Activated T-helper 1 cell treated with anti-CD3 and anti-CD28 coated beads, Interleukin-12 subunit alpha, Interleukin-12 subunit beta, Interleukin-2, Interleukin-4 antibody, amounts not matched to agents 30 ng/mL and 10 ng/mL and 1 ng/mL, durations not matched to agents 14 hours and 24 hours and 36 hours (primary cell): ENCODE measurements at regions of chr12 and their contacts with region 1.

Region 1: GRCh38 chr12:14460212-14460841 is 94.8 kb downstream of the ATF7IP start:
- DNase-seq: no peak
- H3K4me3 Mint-ChIP-seq: no peak overlapping the region
- H3K27ac Mint-ChIP-seq: no peak overlapping the region
- H3K4me1 Mint-ChIP-seq: peaks cover 32% of the 10 kb centered on the region
- H3K27me3 Mint-ChIP-seq: no peaks in the 10 kb centered on the region

Region 2: DNA sequence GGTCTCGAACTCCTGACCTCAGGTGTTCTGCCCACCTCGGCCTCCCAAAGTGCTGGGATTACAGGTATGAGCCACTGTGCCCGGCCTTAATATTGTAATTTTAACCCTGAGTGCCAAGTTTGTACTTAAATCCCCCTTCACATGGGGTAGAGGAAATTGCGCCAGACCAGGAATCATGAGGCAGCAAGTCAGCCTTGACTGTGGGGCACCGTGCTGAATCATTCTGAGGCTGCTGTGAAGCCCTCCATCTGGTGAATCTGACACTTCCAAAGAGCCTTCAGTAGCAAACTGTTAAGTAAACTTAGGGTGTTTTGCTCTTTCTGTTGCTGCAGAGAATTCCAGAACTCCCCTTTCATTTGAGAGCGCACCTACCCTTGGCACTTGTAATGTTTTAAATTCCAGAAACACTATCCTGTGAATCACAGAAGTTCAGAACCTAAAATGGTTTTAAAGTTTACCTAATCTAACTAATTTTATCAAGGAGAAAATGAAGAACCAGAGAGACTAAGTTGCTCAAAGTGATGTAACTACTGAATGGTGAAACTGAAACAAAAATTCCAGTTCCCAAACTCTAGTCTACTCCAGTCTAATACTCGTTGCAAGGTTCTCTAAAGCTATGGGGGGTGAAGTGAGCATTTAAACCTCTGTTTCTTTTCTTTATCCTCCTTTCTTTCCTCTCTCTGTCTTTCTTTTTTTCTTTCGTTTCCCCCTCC is 1467.8 kb before region 1 on chr12:
- intact Hi-C with region 1: no loop called
- DNase-seq: no peak
- H3K4me3 Mint-ChIP-seq: no peak overlapping the region
- H3K27ac Mint-ChIP-seq: no peak overlapping the region
- H3K4me1 Mint-ChIP-seq: peaks cover 20% of the 10 kb centered on the region
- H3K27me3 Mint-ChIP-seq: no peaks in the 10 kb centered on the region

Region 3: GRCh38 chr12:13347241-13348043 is 1112.9 kb before region 1 on chr12:
- intact Hi-C with region 1: no loop called
- DNase-seq: no peak
- H3K4me3 Mint-ChIP-seq: no peak overlapping the region
- H3K27ac Mint-ChIP-seq: no peak overlapping the region
- H3K4me1 Mint-ChIP-seq: peaks cover 12% of the 10 kb centered on the region
- H3K27me3 Mint-ChIP-seq: peaks cover 11% of the 10 kb centered on the region

Region 4: GRCh38 chr12:14185427-14186192 is 274.7 kb before region 1 on chr12:
- intact Hi-C with region 1: no loop called
- DNase-seq: peak; percentile 3
- H3K4me3 Mint-ChIP-seq: no peak overlapping the region
- H3K27ac Mint-ChIP-seq: no peak overlapping the region
- H3K4me1 Mint-ChIP-seq: no peaks in the 10 kb centered on the region
- H3K27me3 Mint-ChIP-seq: peaks cover 4% of the 10 kb centered on the region

Region 5: DNA sequence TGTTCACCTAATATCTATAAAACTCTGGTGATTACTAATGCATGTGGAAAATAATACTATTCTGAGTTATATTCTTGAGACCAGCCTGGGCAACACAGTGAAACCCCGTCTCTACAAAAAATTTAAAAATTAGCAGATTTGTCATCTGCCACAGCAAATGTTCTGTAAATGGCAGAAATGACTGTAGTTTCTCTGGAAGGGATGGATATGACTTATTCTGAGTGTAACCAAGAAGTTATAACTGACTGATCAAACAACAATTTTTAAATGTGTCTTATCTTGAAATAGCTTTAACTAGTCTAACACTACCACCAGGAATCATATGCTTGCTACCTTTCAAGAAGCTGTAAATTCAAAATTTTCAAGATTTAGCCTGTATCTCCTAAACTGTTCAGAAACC is 18.7 kb after region 1 on chr12:
- intact Hi-C with region 1: loop called (anchors 2 kb)
- DNase-seq: no peak
- H3K4me3 Mint-ChIP-seq: no peak overlapping the region
- H3K27ac Mint-ChIP-seq: no peak overlapping the region
- H3K4me1 Mint-ChIP-seq: peaks cover 6% of the 10 kb centered on the region
- H3K27me3 Mint-ChIP-seq: no peaks in the 10 kb centered on the region

Region 6: DNA sequence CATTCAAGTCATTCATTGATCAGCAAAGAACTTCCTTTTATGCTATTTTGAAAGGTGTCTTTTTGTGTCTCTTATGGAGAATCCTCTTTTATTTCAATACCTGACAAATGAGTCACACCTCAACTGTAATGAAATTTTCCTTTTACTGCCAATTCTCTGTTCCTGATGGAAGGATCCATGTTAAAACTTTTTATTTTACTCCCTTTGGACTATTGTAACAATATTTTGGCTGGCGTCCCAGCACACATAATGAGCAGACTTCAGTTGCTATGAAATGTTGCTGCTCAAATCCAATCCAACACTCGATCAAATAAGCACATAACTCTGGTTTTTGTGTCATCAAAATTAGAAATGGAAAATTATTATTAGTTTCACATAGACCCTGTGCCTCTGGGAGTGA is 1839.1 kb after region 1 on chr12:
- intact Hi-C with region 1: no loop called
- DNase-seq: no peak
- H3K4me3 Mint-ChIP-seq: no peak overlapping the region
- H3K27ac Mint-ChIP-seq: no peak overlapping the region
- H3K4me1 Mint-ChIP-seq: no peaks in the 10 kb centered on the region
- H3K27me3 Mint-ChIP-seq: no peaks in the 10 kb centered on the region